ENCODE measurements at regions of chr5 and their contacts with region 1.

Region 1: GRCh38 chr5:3394891-3395599 is 200.6 kb upstream of the IRX1 start:
- DNase-seq: no peak
- ATAC-seq: no peak

Region 2: GRCh38 chr5:3349704-3350565 is 45.1 kb before region 1 on chr5:
- intact Hi-C with region 1: loop called (anchors 1 kb)
- DNase-seq: peak; percentile 22
- ATAC-seq: no peak

Region 3: GRCh38 chr5:3466392-3466791 is 71.3 kb after region 1 on chr5:
- intact Hi-C with region 1: no loop called
- DNase-seq: no peak
- ATAC-seq: no peak

Region 4: DNA sequence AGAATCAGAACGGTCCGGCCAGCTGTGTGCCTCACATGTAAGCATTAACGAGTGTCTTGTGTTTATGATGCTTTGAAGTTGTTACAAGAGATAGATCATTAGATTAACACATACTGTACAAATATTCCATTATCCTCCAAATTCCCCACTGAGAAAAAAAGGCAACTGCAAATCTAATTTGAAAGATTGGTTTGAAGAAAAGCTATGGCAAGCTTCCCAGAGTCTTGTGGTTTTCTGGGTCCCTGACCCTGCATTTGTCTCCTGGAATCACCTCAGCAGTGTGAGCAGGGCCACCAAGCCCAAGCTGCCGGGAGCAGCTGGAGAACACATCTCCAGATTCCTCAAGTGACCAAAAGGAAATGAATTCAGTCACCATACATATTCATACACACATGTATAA is 1708.2 kb after region 1 on chr5:
- intact Hi-C with region 1: loop called (anchors 5 kb)
- DNase-seq: no peak
- ATAC-seq: no peak

Measured in sciatic nerve (tissue), 2 donors.